Tibial artery (tissue), 4 donors: ENCODE measurements at regions of chr5 and their contacts with region 1.

Region 1: DNA sequence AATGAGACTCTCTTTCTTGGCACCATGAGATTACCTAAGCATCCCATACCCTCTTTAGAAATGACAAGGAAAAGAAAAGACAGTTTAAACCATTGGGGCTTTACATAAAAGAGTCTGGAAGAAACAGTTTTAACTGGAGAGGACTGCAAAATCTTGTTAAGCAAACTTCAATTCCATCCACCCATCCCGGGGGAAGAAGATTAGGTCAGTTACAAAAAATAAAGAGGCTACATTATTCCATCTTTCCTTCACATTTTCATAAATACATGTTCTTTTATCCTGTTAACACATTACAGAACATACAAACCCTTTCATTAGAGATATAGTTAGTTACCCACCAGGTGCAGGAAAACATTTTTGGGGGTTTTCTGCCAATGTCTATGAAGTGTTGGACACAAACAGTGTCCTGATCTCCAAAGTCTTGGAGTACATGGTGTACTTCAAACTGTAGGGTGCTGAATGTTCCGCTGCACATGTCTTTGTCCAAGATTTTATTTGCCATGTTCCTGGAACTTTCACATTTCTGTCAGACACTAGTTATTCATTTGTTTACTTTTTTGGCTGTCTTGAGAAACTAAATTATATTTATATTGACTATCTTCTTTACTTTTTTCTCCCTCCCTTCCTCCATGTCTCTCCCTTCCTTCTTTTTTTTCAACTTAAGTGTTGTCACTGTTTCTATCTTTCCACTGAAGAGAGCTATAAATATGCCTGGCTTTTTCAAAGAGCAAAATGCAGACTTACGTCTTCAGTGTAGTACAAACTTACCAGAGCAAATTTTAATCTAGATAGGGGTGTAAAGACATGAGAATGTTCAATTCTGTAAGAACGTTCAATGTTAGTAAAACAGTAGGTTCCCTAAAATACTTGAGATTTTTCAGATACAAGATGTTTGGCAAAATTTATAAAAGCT is 410.9 kb upstream of the PRR16 start:
- DNase-seq: no peak
- H3K4me3 ChIP-seq: peak overlapping the region in 1 of 2 donors; percentile 1
- H3K27ac ChIP-seq: peak overlapping the region; percentile 73 to 76
- H3K4me1 ChIP-seq: peaks cover 0 to 57% (median 3%) of the 10 kb centered on the region in 4 donors
- H3K27me3 ChIP-seq: no peaks in the 10 kb centered on the region
- CTCF ChIP-seq: no peak

Region 2: DNA sequence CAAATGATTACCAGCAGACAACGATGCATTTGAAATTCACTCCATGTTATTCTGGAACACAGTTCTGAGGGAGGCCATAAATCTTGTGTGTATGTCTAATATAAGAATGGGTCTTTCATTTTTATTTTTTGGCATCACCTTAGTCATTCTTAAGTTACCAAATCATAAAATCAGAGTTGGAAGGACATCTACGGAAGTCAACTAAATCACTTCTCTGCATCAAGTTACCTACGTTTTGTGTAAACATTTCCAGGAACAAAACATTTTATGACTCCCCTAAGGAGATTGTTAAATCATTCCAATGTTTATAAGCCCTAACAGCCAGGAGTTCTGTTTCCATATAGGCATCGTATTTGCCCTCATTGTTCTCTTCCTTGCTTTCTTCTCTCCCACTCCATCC is 45.6 kb before region 1 on chr5:
- intact Hi-C with region 1: no loop called
- DNase-seq: no peak
- H3K4me3 ChIP-seq: no peak overlapping the region
- H3K27ac ChIP-seq: no peak overlapping the region
- H3K4me1 ChIP-seq: peaks cover 0 to 11% (median 0%) of the 10 kb centered on the region in 4 donors
- H3K27me3 ChIP-seq: no peaks in the 10 kb centered on the region
- CTCF ChIP-seq: no peak

Region 3: GRCh38 chr5:120140501-120140900 is 87.3 kb after region 1 on chr5:
- intact Hi-C with region 1: loop called (anchors 5 kb)
- DNase-seq: no peak
- H3K4me3 ChIP-seq: no peak overlapping the region
- H3K27ac ChIP-seq: peak overlapping the region; percentile 57 to 66
- H3K4me1 ChIP-seq: peaks cover 0 to 19% (median 10%) of the 10 kb centered on the region in 4 donors
- H3K27me3 ChIP-seq: no peaks in the 10 kb centered on the region
- CTCF ChIP-seq: no peak